AG04450 (cell line): ENCODE measurements at regions of chr4 and their contacts with region 1.

Region 1: GRCh38 chr4:85968945-85969819 is 390.7 kb downstream of the MAPK10 start:
- DNase-seq: peak; percentile 15
- H3K4me3 ChIP-seq: no peak overlapping the region
- H3K27ac ChIP-seq: no peak overlapping the region
- H3K27me3 ChIP-seq: no peaks in the 10 kb centered on the region
- CTCF ChIP-seq: peak; percentile 67

Region 2: DNA sequence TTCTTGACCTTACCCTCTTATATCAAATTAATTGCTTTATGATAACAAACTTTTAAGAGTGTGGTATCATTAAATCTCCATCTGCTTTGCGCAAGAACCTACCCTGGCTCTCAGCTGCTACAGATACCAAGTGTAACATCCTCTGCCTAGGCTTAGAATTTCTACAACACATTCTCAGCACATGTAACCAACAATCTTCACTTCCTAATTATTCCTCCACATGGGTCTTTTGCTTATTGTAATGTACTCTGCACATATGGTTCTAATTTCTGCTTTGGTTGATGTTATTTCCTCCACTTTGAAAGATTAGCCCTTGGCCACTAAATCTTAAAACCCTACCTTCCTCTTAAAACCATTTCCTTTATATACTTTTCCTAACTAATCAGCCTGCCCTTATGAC is 251.8 kb before region 1 on chr4:
- CTCF ChIA-PET with region 1: no interaction called
- POLR2A ChIA-PET with region 1: no interaction called
- DNase-seq: no peak
- H3K4me3 ChIP-seq: no peak overlapping the region
- H3K27ac ChIP-seq: no peak overlapping the region
- H3K27me3 ChIP-seq: no peaks in the 10 kb centered on the region
- CTCF ChIP-seq: no peak

Region 3: DNA sequence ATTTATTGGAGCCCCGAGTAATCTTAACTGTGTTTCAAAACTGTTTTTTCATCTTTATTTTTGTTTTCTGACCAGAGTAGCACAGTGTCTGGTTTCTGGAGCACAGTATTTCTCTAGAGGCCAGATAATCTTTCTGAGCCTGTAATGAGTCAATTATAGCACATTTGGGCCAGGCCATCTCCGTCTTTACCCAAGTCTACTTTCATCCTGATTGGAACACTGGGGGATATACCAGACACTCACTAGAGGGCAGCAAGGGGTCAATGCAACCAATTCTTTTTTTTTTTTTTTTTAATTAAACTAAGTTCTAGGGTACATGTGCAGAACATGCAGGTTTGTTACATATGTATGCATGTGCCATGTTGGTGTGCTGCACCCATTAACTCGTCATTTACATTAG is 212.2 kb before region 1 on chr4:
- CTCF ChIA-PET with region 1: interaction called, 34 read pairs
- POLR2A ChIA-PET with region 1: no interaction called
- DNase-seq: no peak
- H3K4me3 ChIP-seq: no peak overlapping the region
- H3K27ac ChIP-seq: no peak overlapping the region
- H3K27me3 ChIP-seq: no peaks in the 10 kb centered on the region
- CTCF ChIP-seq: peak; percentile 67

Region 4: GRCh38 chr4:85778632-85779131 is 190.5 kb before region 1 on chr4:
- CTCF ChIA-PET with region 1: interaction called, 18 read pairs
- POLR2A ChIA-PET with region 1: no interaction called
- DNase-seq: no peak
- H3K4me3 ChIP-seq: peak overlapping the region; percentile 67
- H3K27ac ChIP-seq: peak overlapping the region; percentile 33
- H3K27me3 ChIP-seq: no peaks in the 10 kb centered on the region
- CTCF ChIP-seq: no peak

Region 5: GRCh38 chr4:85955620-85956292 is 13.4 kb before region 1 on chr4:
- CTCF ChIA-PET with region 1: interaction called, 12 read pairs
- POLR2A ChIA-PET with region 1: no interaction called
- DNase-seq: no peak
- H3K4me3 ChIP-seq: no peak overlapping the region
- H3K27ac ChIP-seq: no peak overlapping the region
- H3K27me3 ChIP-seq: no peaks in the 10 kb centered on the region
- CTCF ChIP-seq: no peak

Region 6: DNA sequence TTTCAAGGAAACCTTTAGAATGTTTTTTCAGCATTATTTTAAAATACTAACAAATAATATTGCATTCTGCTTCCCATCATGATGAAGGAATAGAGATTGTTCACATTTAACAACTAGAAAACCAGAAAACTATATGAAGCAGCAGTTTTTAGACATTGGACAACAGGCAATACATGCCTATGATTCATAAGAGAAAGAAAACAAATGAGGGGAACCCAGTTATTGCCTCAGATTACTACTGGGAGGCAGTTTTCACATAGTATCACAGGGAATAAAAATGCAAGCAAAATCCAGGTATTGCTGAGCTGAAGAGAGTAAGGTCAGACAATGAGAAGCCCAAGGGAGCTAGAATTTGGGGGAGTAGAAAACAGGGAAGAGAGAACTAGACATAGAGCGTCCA is 17.1 kb after region 1 on chr4:
- CTCF ChIA-PET with region 1: interaction called, 14 read pairs
- POLR2A ChIA-PET with region 1: no interaction called
- DNase-seq: no peak
- H3K4me3 ChIP-seq: no peak overlapping the region
- H3K27ac ChIP-seq: no peak overlapping the region
- H3K27me3 ChIP-seq: no peaks in the 10 kb centered on the region
- CTCF ChIP-seq: no peak